ENCODE measurements at regions of chr2 and their contacts with region 1.

Region 1: GRCh38 chr2:8681786-8682692 is at the start of gene ID2:
- DNase-seq: peak; percentile 99
- H3K4me3 Mint-ChIP-seq: peak within 1 kb of the TSS; percentile 98
- H3K27ac Mint-ChIP-seq: peak within 1 kb of the TSS; percentile 95
- H3K4me1 Mint-ChIP-seq: peaks cover 35% of the 10 kb centered on the region
- H3K27me3 Mint-ChIP-seq: peaks cover 15% of the 10 kb centered on the region
- total RNA-seq, gene ID2: 182 to 193 TPM

Region 2: DNA sequence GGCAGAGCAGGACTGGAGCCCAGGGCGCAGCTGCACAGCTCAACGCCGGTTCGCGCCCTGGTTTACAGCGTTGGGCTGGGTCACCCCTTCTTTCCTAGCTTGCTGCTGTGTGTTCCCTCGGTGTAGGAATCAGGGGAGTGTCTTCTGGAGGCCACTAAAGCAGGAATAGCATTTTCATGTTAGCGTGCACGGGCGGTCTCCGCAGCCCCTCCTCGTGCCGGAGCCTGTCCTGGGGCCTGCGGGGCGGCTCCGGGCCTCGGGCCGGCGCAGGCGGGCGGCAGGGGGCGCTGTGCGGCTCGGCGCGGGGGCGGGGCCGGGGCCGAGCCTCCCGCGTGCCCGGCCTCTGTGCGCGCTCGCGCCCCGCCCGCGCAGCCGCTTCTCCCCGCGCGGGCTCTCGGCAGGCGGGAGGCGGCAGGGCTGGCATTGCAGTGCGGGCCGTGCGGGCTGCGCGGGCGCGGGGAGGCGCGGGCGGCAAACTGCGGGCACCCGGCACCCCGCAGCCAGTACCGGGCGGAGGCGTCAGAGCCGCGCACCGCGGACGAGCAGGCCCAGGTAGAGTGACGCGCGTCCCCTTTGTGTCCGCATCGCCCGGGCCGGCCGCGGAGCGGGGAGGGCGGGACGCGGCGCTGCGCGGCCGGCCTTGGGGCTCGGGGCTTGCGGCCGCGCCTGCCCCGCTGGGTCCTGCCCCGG is 1764.8 kb before region 1 on chr2 and contains the start of gene RNF144A:
- CTCF ChIA-PET with region 1: no interaction called
- POLR2A ChIA-PET with region 1: no interaction called
- intact Hi-C with region 1: loop called (anchors 10 kb)
- DNase-seq: peak; percentile 78
- H3K4me3 Mint-ChIP-seq: peak within 1 kb of the TSS; percentile 69
- H3K27ac Mint-ChIP-seq: peak within 1 kb of the TSS; percentile 67
- H3K4me1 Mint-ChIP-seq: peaks cover 66% of the 10 kb centered on the region
- H3K27me3 Mint-ChIP-seq: no peaks in the 10 kb centered on the region
- total RNA-seq, gene RNF144A: 21.4 to 22.7 TPM

Region 3: GRCh38 chr2:7567646-7568045 is 1114.4 kb before region 1 on chr2:
- CTCF ChIA-PET with region 1: no interaction called
- POLR2A ChIA-PET with region 1: interaction called, 3 read pairs
- intact Hi-C with region 1: loop called (anchors 10 kb)
- DNase-seq: peak; percentile 78
- H3K4me3 Mint-ChIP-seq: peak overlapping the region; percentile 23
- H3K27ac Mint-ChIP-seq: peak overlapping the region; percentile 84
- H3K4me1 Mint-ChIP-seq: peaks cover 64% of the 10 kb centered on the region
- H3K27me3 Mint-ChIP-seq: no peaks in the 10 kb centered on the region

Region 4: DNA sequence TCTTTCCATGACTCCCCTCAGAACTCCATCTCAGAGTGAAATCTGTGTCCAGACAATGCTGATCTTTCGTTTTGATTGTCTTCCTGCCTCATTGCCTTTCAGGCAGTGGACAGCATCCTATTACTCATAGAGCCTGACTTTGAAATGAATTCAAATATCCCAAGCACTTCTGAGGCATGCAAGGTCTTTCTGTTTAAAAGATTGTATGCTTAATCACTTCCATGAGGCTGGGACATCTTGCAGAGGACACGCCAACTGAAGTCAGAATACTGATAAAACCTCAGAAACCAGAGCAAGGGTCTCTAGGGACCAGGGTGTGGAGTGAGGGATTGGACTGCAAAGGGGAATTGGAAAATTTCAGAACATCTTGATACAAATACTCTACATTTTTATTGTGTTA is 836.7 kb before region 1 on chr2:
- CTCF ChIA-PET with region 1: no interaction called
- POLR2A ChIA-PET with region 1: interaction called, 3 read pairs
- intact Hi-C with region 1: loop called (anchors 5 kb)
- DNase-seq: no peak
- H3K4me3 Mint-ChIP-seq: no peak overlapping the region
- H3K27ac Mint-ChIP-seq: no peak overlapping the region
- H3K4me1 Mint-ChIP-seq: peaks cover 36% of the 10 kb centered on the region
- H3K27me3 Mint-ChIP-seq: peaks cover 7% of the 10 kb centered on the region

Region 5: DNA sequence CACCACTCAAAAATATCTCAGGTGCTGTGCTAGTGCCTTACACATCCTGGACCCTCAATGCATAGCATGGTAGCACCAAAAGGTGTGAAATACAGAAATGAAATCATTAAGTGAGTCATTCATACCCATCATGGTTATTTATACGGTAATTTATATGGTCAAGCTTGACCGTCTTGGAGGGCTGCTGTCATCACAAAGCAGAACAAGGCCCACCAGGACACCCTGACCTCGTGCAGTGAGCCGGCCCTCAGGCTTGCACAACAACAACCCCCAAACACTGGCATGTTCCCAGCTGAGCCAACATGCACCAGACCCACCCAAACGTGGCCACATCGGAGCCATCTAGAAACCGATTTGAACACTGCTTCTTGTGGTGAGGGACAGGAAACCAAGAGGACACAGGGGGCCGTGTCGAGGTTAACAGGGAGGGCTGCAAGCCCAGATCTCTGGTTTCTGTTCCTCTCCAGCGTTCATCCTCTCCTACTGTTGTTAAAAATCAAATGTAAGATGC is 378.7 kb before region 1 on chr2:
- CTCF ChIA-PET with region 1: no interaction called
- POLR2A ChIA-PET with region 1: interaction called, 5 read pairs
- intact Hi-C with region 1: loop called (anchors 2 kb)
- DNase-seq: peak; percentile 81
- H3K4me3 Mint-ChIP-seq: no peak overlapping the region
- H3K27ac Mint-ChIP-seq: peak overlapping the region; percentile 16
- H3K4me1 Mint-ChIP-seq: peaks cover 62% of the 10 kb centered on the region
- H3K27me3 Mint-ChIP-seq: peaks cover 6% of the 10 kb centered on the region

Region 6: GRCh38 chr2:8477552-8478470 is 204.2 kb before region 1 on chr2:
- CTCF ChIA-PET with region 1: interaction called, 4 read pairs
- POLR2A ChIA-PET with region 1: interaction called, 33 read pairs
- intact Hi-C with region 1: no loop called
- DNase-seq: peak; percentile 51
- H3K4me3 Mint-ChIP-seq: peak overlapping the region; percentile 60
- H3K27ac Mint-ChIP-seq: peak overlapping the region; percentile 90
- H3K4me1 Mint-ChIP-seq: peaks cover 91% of the 10 kb centered on the region
- H3K27me3 Mint-ChIP-seq: no peaks in the 10 kb centered on the region

Region 7: DNA sequence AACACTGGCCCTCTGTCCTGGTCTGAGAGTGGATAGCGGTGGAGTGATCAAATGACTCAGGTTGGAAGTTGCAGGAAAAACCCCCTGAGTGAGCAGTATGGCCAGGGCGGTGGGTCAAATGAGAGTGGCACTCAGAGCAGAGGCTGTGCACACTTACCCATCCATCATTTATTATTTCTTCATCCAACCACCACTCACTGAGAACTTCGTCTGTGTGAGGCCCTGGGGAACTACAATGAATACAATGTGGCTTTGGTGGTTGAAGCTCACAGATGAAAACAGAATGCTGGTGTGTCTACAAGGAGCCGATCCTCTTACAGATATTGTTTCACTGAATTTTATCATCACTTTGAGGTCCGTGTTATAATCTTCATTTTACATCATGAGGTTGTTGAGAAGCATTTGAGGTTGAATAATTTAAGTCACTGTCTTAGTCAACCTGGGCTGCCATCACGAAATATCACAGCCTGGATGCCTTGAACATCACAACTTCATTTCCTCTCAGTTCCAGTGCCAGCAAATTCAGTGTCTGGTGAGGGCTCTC is 73.6 kb before region 1 on chr2:
- CTCF ChIA-PET with region 1: no interaction called
- POLR2A ChIA-PET with region 1: interaction called, 3 read pairs
- intact Hi-C with region 1: loop called (anchors 1 kb)
- DNase-seq: peak; percentile 67
- H3K4me3 Mint-ChIP-seq: no peak overlapping the region
- H3K27ac Mint-ChIP-seq: peak overlapping the region; percentile 72
- H3K4me1 Mint-ChIP-seq: peaks cover 34% of the 10 kb centered on the region
- H3K27me3 Mint-ChIP-seq: no peaks in the 10 kb centered on the region